GM23248 (cell line): ENCODE measurements at regions of chr20 and their contacts with region 1.

Region 1: GRCh38 chr20:20568604-20569205 is 143.7 kb downstream of the RALGAPA2 start:
- DNase-seq: peak; percentile 74
- H3K4me3 ChIP-seq: no peak overlapping the region
- H3K27ac ChIP-seq: no peak overlapping the region
- H3K4me1 ChIP-seq: no peaks in the 10 kb centered on the region
- H3K27me3 ChIP-seq: no peaks in the 10 kb centered on the region

Region 2: DNA sequence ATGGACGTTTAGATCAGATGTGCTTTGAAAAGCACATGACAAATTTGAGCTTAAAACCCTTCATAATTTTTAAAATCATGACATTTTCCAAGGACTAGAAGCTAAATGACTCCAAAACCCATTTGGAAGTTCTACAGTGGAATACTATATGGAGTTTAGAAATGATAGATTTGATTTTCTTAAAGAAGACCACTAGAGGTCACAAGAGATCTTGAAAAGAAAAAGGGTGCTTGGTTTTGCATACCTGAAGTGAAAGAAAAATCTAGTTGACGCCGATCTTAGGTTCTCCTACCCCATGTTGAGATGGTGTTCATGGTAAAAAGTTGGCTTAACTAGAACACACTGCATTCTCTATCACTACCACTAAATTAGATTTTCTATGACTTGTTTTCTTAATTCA is 484.9 kb before region 1 on chr20:
- in situ Hi-C with region 1: loop called (anchors 25 kb)
- DNase-seq: peak; percentile 55
- H3K4me3 ChIP-seq: no peak overlapping the region
- H3K27ac ChIP-seq: no peak overlapping the region
- H3K4me1 ChIP-seq: peaks cover 8% of the 10 kb centered on the region; the same call in 1 of the 2 replicates
- H3K27me3 ChIP-seq: peaks cover 14% of the 10 kb centered on the region